ENCODE measurements at regions of chr5 and their contacts with region 1.

Region 1: DNA sequence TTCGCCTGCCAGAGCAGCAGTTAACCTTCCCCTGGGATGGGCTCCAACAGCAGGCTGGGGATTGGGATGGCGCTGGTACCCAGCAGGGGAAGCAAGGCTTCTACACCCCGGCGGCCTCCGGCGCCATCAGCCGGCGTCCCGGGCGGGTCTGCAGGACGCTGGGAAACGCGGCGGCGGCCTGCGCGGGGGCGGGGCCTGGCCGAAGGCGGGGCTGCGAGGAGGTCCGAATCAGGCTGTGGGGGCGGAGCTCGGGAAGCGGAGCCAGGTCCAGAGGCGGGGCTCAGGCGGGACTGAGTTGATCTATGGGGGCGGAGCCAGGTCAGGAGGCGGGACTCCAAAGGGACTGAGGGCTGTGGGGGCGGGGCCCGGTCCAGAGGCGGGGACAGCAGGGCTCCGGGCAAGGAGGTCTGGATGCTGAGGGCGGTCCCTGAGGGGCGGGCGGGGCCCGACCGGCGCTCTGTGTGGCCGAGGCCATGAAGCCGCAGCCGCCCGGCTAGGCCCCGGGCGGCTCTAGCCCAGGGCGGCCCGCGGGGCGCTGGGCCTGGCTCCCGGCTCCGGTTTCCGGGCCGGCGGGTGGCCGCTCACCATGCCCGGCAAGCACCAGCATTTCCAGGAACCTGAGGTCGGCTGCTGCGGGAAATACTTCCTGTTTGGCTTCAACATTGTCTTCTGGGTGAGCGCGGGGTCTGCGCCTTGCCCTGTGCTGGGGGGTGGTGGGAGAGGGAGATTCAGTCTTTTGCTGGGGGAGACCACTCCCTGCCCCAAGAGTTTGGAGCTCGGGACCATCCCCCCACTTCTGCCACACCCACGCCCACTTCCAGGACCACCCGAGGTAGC is at the start of gene TSPAN17:
- DNase-seq: peak; percentile 100
- ATAC-seq: peak; percentile 98
- total RNA-seq, gene TSPAN17: 21.2 to 25.6 TPM

Region 2: DNA sequence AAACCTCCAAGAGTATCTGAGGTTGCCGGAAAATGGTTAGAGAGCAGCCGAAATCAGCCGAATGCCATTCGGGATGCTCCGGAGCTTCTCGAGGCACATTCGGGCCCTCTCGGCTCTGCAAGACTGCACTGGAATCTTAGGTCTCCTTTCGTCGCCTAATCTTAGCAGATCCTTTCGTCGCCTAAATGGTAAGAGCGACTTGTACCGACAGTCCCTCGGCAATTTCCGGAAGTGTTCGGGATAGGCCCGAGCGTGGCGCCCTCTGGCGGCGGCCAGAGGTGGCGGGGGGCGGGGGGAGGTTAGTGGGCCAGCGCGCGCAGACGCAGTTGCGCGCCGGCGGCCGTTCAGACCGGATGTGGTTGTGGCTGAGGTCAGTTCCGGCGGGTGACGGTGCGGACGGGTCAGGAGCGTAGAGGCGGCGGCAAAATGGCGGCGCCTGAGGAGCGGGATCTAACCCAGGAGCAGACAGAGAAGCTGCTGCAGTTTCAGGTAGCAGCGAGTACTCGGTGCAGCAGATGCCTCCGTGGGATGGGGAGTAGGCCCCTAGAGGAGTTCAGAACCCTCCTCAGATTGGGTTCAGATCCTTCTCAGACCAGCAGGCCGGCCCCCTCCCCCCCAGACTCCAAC is 199.2 kb before region 1 on chr5 and contains the start of gene FAF2:
- intact Hi-C with region 1: loop called in 1 of 2 experiments (anchors 10 kb)
- DNase-seq: peak; percentile 96
- ATAC-seq: peak; percentile 99
- total RNA-seq, gene FAF2: 15.3 to 23.3 TPM

Region 3: GRCh38 chr5:176573564-176574296 is 73.5 kb before region 1 on chr5:
- intact Hi-C with region 1: loop called (anchors 5 kb)
- DNase-seq: peak; percentile 75
- ATAC-seq: peak; percentile 87 to 88

Region 4: DNA sequence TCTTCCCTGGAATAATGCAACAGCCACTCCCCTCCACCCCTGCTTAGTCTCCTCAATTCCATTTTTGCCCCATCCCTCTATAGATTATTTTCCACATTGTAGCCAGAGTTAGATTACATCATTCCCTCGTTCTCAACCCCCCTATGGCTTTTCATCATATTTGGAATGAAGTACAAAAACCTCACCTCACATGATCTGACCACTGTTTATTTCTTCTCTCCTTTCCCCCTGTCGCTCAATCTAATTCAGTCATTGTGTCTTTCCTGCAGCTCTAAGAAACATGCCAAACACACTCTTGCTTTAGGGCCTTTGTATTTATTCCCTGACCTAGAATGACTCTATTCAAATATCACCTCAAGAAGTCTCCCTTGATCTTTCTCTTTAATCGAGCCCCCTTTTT is 274.5 kb after region 1 on chr5:
- intact Hi-C with region 1: no loop called
- DNase-seq: no peak
- ATAC-seq: no peak

Measured in left cardiac atrium (tissue), 4 donors.